Caco-2 (cell line): ENCODE measurements at regions of chr4 and their contacts with region 1.

Region 1: GRCh38 chr4:87375719-87376291 is 15.2 kb downstream of the HSD17B11 start:
- DNase-seq: peak; percentile 44 to 56
- H3K4me3 ChIP-seq: no peak overlapping the region
- H3K4me3 Mint-ChIP-seq: no peak overlapping the region
- H3K27ac Mint-ChIP-seq: no peak overlapping the region
- H3K4me1 ChIP-seq: peaks cover 4% of the 10 kb centered on the region
- H3K4me1 Mint-ChIP-seq: no peaks in the 10 kb centered on the region
- H3K27me3 ChIP-seq: no peaks in the 10 kb centered on the region
- H3K27me3 Mint-ChIP-seq: no peaks in the 10 kb centered on the region
- CTCF ChIP-seq: peak; percentile 49 to 66

Region 2: GRCh38 chr4:87270144-87270543 is 105.7 kb before region 1 on chr4:
- CTCF ChIA-PET with region 1: no interaction called
- POLR2A ChIA-PET with region 1: no interaction called
- intact Hi-C with region 1: loop called (anchors 1 kb)
- DNase-seq: peak in 1 of 2 experiments; percentile 42
- H3K4me3 ChIP-seq: no peak overlapping the region
- H3K4me3 Mint-ChIP-seq: no peak overlapping the region
- H3K27ac Mint-ChIP-seq: no peak overlapping the region
- H3K4me1 ChIP-seq: no peaks in the 10 kb centered on the region; the same call in 1 of the 2 replicates
- H3K4me1 Mint-ChIP-seq: no peaks in the 10 kb centered on the region
- H3K27me3 ChIP-seq: no peaks in the 10 kb centered on the region
- H3K27me3 Mint-ChIP-seq: peaks cover 2% of the 10 kb centered on the region
- CTCF ChIP-seq: peak in 1 of 2 experiments; percentile 68

Region 3: DNA sequence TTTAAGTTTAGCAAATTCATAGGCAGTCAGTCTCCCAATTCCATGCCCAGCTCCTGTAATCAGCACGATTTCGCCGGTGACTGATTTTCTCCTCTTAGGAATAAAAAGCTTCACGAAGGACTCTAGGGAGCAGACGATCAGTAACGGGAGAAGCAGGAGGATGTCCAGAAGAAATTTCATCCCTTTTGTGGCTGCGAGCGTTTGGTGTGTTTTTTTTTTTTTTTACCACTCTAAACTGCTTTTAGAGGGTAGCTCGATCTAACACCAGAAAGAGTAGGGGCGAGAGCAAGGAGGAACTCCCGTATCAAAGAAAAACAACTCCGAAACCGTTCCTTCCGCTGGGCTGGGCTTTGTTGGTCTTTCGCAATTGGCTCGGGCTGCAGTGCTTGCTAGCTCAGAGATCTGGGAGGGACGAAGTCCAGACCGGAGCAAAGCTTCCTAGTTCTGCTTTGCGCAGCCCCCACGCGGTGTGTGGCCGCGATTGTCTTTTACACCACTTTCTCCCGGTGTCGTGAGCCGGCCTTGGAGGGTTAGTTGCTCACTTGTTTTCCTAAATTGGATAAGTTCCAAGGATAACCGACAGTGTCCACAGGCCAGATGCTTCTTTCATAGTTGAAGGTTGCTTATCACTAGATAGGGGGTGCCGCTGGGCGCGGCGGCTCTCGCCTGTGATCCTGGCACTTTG is 15.2 kb after region 1 on chr4 and contains the start of gene HSD17B11:
- CTCF ChIA-PET with region 1: interaction called, 5 read pairs
- POLR2A ChIA-PET with region 1: no interaction called
- intact Hi-C with region 1: loop called (anchors 1 kb)
- DNase-seq: peak; percentile 85 to 90
- H3K4me3 ChIP-seq: peak within 1 kb of the TSS; percentile 53
- H3K4me3 Mint-ChIP-seq: peak within 1 kb of the TSS; percentile 87
- H3K27ac Mint-ChIP-seq: peak within 1 kb of the TSS; percentile 92
- H3K4me1 ChIP-seq: peaks cover 11% of the 10 kb centered on the region; the same call in 1 of the 2 replicates
- H3K4me1 Mint-ChIP-seq: peaks cover 18% of the 10 kb centered on the region
- H3K27me3 ChIP-seq: no peaks in the 10 kb centered on the region
- H3K27me3 Mint-ChIP-seq: no peaks in the 10 kb centered on the region
- CTCF ChIP-seq: no peak
- total RNA-seq, gene HSD17B11: 39.3 and 42.8 TPM in 2 replicates

Region 4: GRCh38 chr4:87409420-87409939 is 33.7 kb after region 1 on chr4:
- CTCF ChIA-PET with region 1: no interaction called
- POLR2A ChIA-PET with region 1: no interaction called
- intact Hi-C with region 1: loop called (anchors 2 kb)
- DNase-seq: peak; percentile 46 to 53
- H3K4me3 ChIP-seq: no peak overlapping the region
- H3K4me3 Mint-ChIP-seq: peak overlapping the region; percentile 49
- H3K27ac Mint-ChIP-seq: peak overlapping the region; percentile 43
- H3K4me1 ChIP-seq: peaks cover 30% of the 10 kb centered on the region
- H3K4me1 Mint-ChIP-seq: peaks cover 23% of the 10 kb centered on the region
- H3K27me3 ChIP-seq: no peaks in the 10 kb centered on the region
- H3K27me3 Mint-ChIP-seq: no peaks in the 10 kb centered on the region
- CTCF ChIP-seq: no peak

Region 5: DNA sequence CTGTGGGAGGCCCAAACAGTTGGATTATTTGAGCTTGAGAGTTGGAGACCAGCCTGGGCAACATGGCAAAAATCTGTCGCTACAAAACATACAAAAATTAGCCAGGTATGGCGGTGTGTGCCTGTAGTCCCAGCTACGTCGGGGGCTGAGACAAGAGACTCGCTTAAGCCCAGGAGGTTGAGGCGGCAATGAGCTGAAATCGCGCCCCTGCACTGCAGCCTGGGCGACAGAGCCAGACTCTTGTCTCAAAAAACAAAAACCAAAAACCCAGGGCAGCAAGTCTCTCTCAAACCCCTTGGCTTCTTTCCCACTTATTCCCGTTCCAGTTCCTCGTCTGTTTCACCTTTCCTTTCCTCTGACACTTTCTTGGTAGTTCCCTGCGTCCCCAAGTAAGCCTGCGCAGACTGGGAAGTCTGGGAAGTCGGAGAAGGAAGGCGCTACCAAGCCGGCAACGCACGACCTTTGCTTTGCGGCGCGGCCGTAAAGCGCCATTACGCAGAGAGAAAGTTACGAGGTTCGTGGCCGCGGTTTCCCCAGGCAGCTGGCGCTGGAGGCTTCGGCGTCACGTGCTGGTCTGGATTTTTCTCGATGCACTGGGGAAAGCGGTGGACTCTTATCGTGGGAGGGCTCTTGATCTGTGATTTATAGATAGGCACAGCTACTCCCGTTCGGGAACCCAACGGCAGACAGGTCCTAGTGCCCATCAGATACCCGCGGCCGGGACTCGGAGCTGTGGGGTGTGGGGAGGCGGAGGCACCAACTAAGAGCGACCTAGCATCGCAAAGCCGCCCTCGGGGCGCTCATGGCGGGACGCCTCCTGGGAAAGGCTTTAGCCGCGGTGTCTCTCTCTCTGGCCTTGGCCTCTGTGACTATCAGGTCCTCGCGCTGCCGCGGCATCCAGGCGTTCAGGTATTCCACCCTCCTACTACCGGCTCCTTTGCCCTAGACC is 46.6 kb after region 1 on chr4 and contains the start of gene NUDT9:
- CTCF ChIA-PET with region 1: no interaction called
- POLR2A ChIA-PET with region 1: no interaction called
- intact Hi-C with region 1: loop called (anchors 1 kb)
- DNase-seq: peak; percentile 93 to 95
- H3K4me3 ChIP-seq: peak within 1 kb of the TSS; percentile 79
- H3K4me3 Mint-ChIP-seq: peak within 1 kb of the TSS; percentile 94
- H3K27ac Mint-ChIP-seq: peak within 1 kb of the TSS; percentile 96
- H3K4me1 ChIP-seq: peaks cover 17% of the 10 kb centered on the region
- H3K4me1 Mint-ChIP-seq: peaks cover 13% of the 10 kb centered on the region
- H3K27me3 ChIP-seq: no peaks in the 10 kb centered on the region
- H3K27me3 Mint-ChIP-seq: no peaks in the 10 kb centered on the region
- CTCF ChIP-seq: no peak
- total RNA-seq, gene NUDT9: 27.9 and 28.7 TPM in 2 replicates

Region 6: DNA sequence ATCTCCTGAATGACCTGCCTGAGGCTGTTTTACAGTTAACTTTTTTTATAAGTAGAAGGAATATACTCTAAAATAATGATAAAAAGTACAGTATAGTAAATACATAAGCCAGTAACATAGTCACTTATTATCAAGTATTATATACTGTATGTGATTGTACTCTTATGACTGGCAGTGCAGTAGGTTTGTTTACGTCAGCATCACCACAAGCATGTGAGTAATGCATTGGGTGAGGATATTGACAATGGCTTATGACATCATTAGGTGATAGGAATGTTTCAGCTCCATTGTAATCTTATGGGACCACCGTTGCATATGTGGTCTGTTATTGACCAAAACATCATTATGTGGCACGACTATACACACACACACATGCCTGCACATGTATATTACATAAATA is 67.1 kb after region 1 on chr4:
- CTCF ChIA-PET with region 1: interaction called, 3 read pairs
- POLR2A ChIA-PET with region 1: no interaction called
- intact Hi-C with region 1: loop called (anchors 5 kb)
- DNase-seq: no peak
- H3K4me3 ChIP-seq: no peak overlapping the region
- H3K4me3 Mint-ChIP-seq: no peak overlapping the region
- H3K27ac Mint-ChIP-seq: no peak overlapping the region
- H3K4me1 ChIP-seq: no peaks in the 10 kb centered on the region
- H3K4me1 Mint-ChIP-seq: peaks cover 14% of the 10 kb centered on the region
- H3K27me3 ChIP-seq: no peaks in the 10 kb centered on the region
- H3K27me3 Mint-ChIP-seq: no peaks in the 10 kb centered on the region
- CTCF ChIP-seq: no peak

Region 7: DNA sequence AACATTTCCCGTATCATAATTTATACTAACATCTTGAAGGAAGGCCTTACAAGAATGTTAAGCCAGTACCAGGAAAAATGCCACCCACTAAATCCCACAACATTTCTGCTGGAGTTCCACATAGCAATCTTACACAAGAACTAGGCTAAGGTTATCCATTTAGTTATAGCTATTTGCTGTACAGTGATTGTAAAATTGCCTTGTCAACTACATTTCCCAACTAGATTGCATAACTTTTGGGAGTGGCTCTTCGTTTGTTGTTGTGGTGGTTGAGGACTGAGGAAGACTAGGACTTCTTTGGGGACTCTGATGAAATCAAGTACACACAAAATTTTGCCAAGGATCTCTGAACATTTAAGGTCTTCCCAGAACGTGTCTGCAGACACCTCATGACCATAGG is 431.6 kb after region 1 on chr4:
- CTCF ChIA-PET with region 1: no interaction called
- POLR2A ChIA-PET with region 1: no interaction called
- intact Hi-C with region 1: no loop called
- DNase-seq: no peak
- H3K4me3 ChIP-seq: no peak overlapping the region
- H3K4me3 Mint-ChIP-seq: no peak overlapping the region
- H3K27ac Mint-ChIP-seq: no peak overlapping the region
- H3K4me1 ChIP-seq: no peaks in the 10 kb centered on the region
- H3K4me1 Mint-ChIP-seq: no peaks in the 10 kb centered on the region
- H3K27me3 ChIP-seq: no peaks in the 10 kb centered on the region
- H3K27me3 Mint-ChIP-seq: peaks cover 7% of the 10 kb centered on the region
- CTCF ChIP-seq: no peak